ENCODE measurements at regions of chr2 and their contacts with region 1.

Region 1: GRCh38 chr2:215269397-215270119 is 42.3 kb upstream of the ATIC start:
- H3K4me3 ChIP-seq: no peak overlapping the region
- H3K27ac ChIP-seq: no peak overlapping the region
- H3K4me1 ChIP-seq: no peaks in the 10 kb centered on the region
- CTCF ChIP-seq: peak; percentile 35; the same call in 1 of the 2 replicates

Region 2: GRCh38 chr2:215207791-215208367 is 61.7 kb before region 1 on chr2:
- CTCF ChIA-PET with region 1: interaction called, 10 read pairs
- POLR2A ChIA-PET with region 1: no interaction called
- H3K4me3 ChIP-seq: no peak overlapping the region
- H3K27ac ChIP-seq: no peak overlapping the region
- H3K4me1 ChIP-seq: no peaks in the 10 kb centered on the region
- CTCF ChIP-seq: no peak

Region 3: GRCh38 chr2:215354771-215355695 is 85.5 kb after region 1 on chr2:
- CTCF ChIA-PET with region 1: no interaction called
- POLR2A ChIA-PET with region 1: no interaction called
- H3K4me3 ChIP-seq: no peak overlapping the region
- H3K27ac ChIP-seq: no peak overlapping the region
- H3K4me1 ChIP-seq: no peaks in the 10 kb centered on the region
- CTCF ChIP-seq: no peak

Region 4: DNA sequence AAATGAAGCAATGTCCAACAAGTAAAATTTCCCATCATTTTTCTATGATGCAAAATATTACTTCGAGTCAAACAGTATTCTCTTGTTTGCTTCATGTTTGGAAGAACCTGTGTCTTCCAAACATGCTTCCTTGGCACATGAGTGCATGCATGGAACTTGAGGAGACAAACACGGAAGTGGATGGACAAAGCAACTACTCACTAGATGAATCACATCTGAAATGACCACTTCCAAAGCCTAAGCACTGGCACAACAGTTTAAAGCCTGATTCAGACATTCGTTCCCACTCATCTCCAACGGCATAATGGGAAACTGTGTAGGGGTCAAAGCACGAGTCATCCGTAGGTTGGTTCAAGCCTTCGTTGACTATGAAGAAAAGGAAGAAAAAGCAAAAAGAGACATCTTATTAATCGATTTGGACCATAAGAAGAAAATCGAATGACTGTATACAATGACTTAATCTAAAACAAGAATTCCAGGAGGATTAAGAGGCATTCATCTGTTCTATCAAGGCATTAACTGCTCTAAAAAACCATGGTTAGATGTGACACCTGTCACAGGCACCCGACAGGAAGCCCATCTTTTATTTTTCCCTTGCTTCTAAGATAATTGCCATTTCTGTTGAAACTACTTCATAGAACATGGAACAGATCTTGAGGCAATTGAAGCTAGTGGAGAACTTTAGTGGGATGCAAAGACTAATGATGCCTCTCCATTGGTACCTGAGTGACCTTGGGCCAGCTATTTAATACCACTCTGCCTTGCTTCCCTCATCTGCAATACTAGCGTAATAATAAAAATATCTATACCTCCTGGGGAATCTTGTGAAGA is 98.3 kb after region 1 on chr2:
- CTCF ChIA-PET with region 1: no interaction called
- POLR2A ChIA-PET with region 1: no interaction called
- H3K4me3 ChIP-seq: no peak overlapping the region
- H3K27ac ChIP-seq: no peak overlapping the region
- H3K4me1 ChIP-seq: no peaks in the 10 kb centered on the region
- CTCF ChIP-seq: no peak

Region 5: DNA sequence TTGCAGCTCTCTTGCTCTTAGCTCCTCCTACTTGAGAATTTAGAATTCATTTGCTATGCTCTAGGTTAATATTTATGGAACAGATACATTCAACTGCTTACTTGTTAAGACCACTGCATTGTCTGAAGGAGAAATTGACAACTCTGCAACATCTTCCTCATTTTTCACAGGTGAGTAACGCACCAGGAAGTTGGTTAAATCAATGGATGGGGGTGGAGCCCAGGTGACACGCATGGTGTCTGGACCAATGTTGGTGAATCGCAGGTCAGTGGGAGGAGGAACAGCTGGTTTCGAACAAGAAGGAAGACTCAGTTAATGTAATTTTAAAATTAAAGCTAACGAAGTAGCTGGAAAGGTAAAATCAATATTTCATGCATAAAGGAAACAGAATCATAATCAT is 122.0 kb after region 1 on chr2:
- CTCF ChIA-PET with region 1: no interaction called
- POLR2A ChIA-PET with region 1: no interaction called
- H3K4me3 ChIP-seq: no peak overlapping the region
- H3K27ac ChIP-seq: no peak overlapping the region
- H3K4me1 ChIP-seq: no peaks in the 10 kb centered on the region
- CTCF ChIP-seq: no peak

Region 6: GRCh38 chr2:215430528-215431187 is 161.1 kb after region 1 on chr2:
- CTCF ChIA-PET with region 1: no interaction called
- POLR2A ChIA-PET with region 1: no interaction called
- H3K4me3 ChIP-seq: no peak overlapping the region
- H3K27ac ChIP-seq: no peak overlapping the region
- H3K4me1 ChIP-seq: 0 out of 2 replicates have a peak, but pooled peaks cover 3% of the 10 kb centered on the region
- CTCF ChIP-seq: no peak